ENCODE measurements at regions of chr3 and their contacts with region 1.

Region 1: GRCh38 chr3:153026026-153026425 is 136.0 kb upstream of the RAP2B start:
- DNase-seq: no peak
- ATAC-seq: no peak
- H3K4me3 ChIP-seq: no peak overlapping the region
- H3K27ac ChIP-seq: no peak overlapping the region
- H3K4me1 ChIP-seq: peaks cover 0 to 15% (median 7%) of the 10 kb centered on the region in 12 donors
- H3K27me3 ChIP-seq: peaks cover 0 to 5% (median 0%) of the 10 kb centered on the region in 9 donors
- CTCF ChIP-seq: peak; percentile 52 to 82 (median 66)
- POLR2A ChIP-seq: no peak

Region 2: GRCh38 chr3:152937234-152937633 is 88.8 kb before region 1 on chr3:
- intact Hi-C with region 1: no loop called
- DNase-seq: no peak
- ATAC-seq: no peak
- H3K4me3 ChIP-seq: no peak overlapping the region
- H3K27ac ChIP-seq: no peak overlapping the region
- H3K4me1 ChIP-seq: no peaks in the 10 kb centered on the region
- H3K27me3 ChIP-seq: no peaks in the 10 kb centered on the region
- CTCF ChIP-seq: peak in 8 of 12 donors; percentile 13 to 55 (median 29)
- POLR2A ChIP-seq: no peak

Region 3: GRCh38 chr3:153595186-153595815 is 569.3 kb after region 1 on chr3:
- intact Hi-C with region 1: loop called in 1 of 10 experiments (anchors 5 kb)
- DNase-seq: no peak
- ATAC-seq: peak in 3 of 4 donors; percentile 53 to 77 (median 65)
- H3K4me3 ChIP-seq: no peak overlapping the region
- H3K27ac ChIP-seq: no peak overlapping the region
- H3K4me1 ChIP-seq: peaks cover 0 to 11% (median 0%) of the 10 kb centered on the region in 12 donors
- H3K27me3 ChIP-seq: no peaks in the 10 kb centered on the region
- CTCF ChIP-seq: peak; percentile 34 to 67 (median 56)
- POLR2A ChIP-seq: no peak

Region 4: DNA sequence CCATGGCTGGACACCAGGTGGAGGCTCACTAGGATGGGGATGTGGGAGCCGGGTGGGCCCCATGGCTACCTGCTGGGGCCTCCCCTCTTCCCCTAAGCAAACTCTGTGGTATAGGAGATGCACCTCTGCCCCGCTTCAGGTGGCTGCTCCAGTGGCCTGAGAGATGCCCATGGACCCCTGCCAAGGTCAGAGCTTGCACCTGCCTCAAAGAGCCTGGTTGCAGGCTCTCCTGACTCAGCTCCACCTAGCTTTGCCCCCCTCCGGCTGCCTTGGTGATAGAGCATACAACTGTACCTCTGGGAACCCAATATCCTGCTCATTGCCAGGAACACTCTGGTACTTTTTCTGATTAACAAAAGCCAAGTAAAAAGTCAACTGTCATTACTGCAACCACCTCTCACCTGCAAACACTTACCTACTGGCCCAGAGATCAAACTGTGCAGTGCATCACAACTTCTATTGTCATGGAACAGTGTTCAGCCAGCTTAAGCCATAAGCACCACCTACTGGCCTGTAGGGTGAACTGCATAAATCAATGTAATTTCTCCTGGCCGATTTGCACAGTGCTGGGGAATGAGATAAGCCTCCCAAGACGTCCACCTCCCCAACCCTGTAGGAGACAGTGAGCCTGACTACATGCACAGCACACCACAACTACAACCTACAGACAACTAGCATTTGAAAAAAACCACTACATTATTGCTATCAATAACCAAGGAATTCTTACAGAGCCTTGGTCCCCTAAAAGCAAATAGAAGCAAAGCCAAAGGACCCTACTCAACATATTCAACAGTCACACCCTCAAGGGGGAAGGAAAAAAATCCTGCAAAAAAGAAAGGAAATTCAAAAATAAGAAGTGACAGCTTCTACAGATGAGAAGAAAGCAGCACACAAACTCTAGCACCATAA is 742.8 kb after region 1 on chr3:
- intact Hi-C with region 1: loop called in 6 of 10 experiments (anchors 2 to 5 kb)
- DNase-seq: peak in 1 of 5 donors; percentile 17
- ATAC-seq: peak; percentile 69 to 85 (median 84)
- H3K4me3 ChIP-seq: no peak overlapping the region
- H3K27ac ChIP-seq: no peak overlapping the region
- H3K4me1 ChIP-seq: no peaks in the 10 kb centered on the region
- H3K27me3 ChIP-seq: no peaks in the 10 kb centered on the region
- CTCF ChIP-seq: peak; percentile 71 to 84 (median 78)
- POLR2A ChIP-seq: no peak